ENCODE measurements at regions of chr3 and their contacts with region 1.

Region 1: GRCh38 chr3:40317061-40317855 is 7.8 kb downstream of the EIF1B start:
- DNase-seq: peak in 30 of 42 donors; percentile 7 to 85 (median 64)

Region 2: DNA sequence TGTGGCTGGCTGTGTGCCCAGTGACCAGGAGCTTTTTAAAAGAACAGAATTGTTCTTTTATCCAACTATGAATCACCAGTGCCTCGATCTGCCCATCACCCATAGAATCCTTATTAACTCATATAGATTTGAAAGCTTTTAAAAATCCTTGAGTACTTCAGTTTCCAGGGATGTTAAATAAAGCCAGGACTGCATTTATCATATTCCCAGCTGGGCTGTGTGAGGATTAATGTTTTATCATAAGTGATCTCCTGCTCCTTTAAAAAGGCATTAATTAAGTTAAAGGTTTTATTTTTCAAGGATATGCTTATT is 273.9 kb before region 1 on chr3:
- intact Hi-C with region 1: no loop called
- DNase-seq: peak in 11 of 42 donors; percentile 3 to 51 (median 19)

Region 3: GRCh38 chr3:40191850-40192448 is 125.3 kb before region 1 on chr3:
- intact Hi-C with region 1: loop called (anchors 2 kb)
- DNase-seq: peak; percentile 27 to 91 (median 75)

Region 4: DNA sequence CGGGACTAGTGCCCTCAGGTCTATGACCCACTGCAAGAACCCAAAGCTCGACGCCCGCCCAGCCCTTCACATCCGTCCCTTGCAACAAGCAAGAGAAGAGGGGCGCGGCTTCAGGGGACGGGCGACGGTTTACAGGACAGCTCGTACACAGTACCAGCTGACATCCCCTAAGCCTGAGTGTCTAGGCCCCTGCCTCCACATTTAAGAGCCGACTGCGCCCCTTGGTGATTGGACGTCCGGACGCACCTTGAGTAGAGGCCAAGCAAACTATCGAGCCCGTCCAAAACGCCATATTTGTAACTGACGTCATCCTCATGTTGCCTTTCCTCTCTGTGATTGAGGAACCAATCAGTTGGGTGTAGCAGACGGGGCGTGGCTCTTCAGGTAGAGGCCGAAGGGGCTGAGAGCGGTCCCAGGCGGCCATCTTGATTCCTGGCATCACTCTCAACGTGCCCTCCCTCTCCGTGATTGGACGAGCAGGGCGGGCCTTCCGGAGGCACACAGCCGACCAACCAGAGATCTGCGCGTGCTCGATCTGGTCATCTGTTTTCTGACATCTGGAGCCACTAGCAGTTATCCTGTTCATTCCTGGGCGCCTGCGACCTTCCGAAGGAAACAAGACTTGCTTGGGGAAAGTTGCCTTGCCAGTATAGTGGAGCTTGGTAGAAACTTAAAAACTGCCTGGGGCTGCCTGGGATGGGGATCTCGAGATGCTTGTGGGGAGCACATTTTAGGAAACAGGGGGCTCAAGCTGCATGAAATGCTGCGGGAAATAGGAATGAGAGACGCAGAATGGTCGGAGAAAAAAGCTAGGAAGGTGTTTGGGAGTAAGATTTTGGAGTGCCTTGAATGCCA is 135.8 kb after region 1 on chr3:
- intact Hi-C with region 1: loop called (anchors 10 kb)
- DNase-seq: peak; percentile 93 to 99 (median 98)

Region 5: DNA sequence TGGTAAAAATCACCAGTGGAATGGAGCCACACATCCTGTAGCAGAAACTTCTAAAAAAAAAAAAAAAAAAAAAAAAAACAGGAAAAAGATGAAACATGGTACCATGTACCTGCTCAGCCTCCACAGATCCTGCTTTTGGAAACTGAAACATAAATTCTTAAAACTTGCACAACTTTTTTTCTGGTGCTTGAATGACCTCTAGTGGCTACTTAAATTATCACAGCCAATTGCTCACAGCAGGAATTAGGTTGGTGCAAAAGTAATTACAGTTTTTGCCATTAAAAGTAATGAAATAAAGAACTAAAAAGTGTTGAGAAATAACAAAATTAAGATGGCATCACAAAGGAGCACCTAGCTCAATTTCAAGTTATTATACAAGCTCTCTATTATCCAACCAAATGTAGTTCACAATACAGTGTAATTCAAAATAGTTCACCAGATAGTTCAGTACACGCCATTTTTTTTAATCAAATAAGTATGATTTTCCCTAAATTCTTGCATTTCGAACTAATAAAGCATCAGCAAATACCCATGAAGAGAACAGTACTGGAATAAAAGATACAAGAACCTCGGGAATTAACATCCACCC is 1564.1 kb after region 1 on chr3:
- intact Hi-C with region 1: loop called (anchors 10 kb)
- DNase-seq: peak in 5 of 42 donors; percentile 9 to 57 (median 21)